ENCODE measurements at regions of chr1 and their contacts with region 1.

Region 1: DNA sequence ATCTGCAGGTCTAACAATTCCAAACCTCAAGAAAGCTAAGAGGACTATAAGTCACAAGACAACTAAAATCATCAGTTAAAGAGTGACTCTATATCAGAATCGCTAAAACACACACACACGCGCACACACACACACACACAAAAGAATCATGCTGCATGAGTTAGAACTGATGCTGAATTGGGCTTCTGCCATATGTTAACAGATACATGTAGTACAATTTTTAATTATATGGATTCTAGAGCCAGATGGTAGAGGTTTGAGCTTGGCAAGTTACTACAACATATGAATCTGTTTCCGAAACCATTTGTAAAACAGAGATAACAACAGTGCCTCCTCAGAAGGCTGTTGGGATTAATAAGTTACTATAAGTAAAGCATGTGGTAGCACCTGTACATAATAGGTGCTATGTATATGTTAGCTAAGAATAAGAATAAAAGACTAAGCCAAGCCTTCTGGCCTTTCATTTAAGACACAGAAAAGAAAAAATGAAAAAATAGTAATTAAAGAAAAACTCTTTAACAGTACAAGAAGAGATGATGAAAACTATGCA is 17.9 kb downstream of the EPRS1 start:
- DNase-seq: no peak
- ATAC-seq: no peak
- H3K4me3 ChIP-seq: no peak overlapping the region
- H3K4me3 Mint-ChIP-seq: no peak overlapping the region
- H3K27ac ChIP-seq: no peak overlapping the region
- H3K27ac Mint-ChIP-seq: no peak overlapping the region
- H3K4me1 ChIP-seq: no peaks in the 10 kb centered on the region
- H3K4me1 Mint-ChIP-seq: no peaks in the 10 kb centered on the region
- H3K27me3 ChIP-seq: no peaks in the 10 kb centered on the region
- H3K27me3 Mint-ChIP-seq: no peaks in the 10 kb centered on the region
- CTCF ChIP-seq: no peak

Region 2: DNA sequence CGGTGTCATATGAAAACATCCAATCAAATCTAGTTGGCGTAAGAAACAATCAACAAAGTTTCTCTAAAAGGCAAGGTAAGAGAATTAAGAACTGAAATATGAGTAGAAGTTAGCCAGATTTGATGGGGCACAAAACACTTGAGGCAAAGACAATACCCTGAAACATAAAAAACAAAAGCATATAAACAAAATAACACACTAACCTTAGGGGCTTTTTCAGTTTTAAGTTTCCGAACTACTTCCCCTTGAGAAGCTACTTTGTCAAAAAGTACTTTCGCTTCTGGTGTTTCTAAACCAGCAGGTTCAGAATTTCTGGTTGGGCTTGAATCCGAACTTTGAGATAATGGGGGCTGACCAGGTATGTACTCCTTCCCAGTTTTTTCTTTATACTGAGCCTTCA is 40.0 kb before region 1 on chr1:
- CTCF ChIA-PET with region 1: no interaction called
- POLR2A ChIA-PET with region 1: no interaction called
- intact Hi-C with region 1: loop called in 1 of 2 experiments (anchors 5 kb)
- DNase-seq: no peak
- ATAC-seq: no peak
- H3K4me3 ChIP-seq: no peak overlapping the region
- H3K4me3 Mint-ChIP-seq: no peak overlapping the region
- H3K27ac ChIP-seq: no peak overlapping the region
- H3K27ac Mint-ChIP-seq: no peak overlapping the region
- H3K4me1 ChIP-seq: no peaks in the 10 kb centered on the region
- H3K4me1 Mint-ChIP-seq: no peaks in the 10 kb centered on the region
- H3K27me3 ChIP-seq: no peaks in the 10 kb centered on the region
- H3K27me3 Mint-ChIP-seq: no peaks in the 10 kb centered on the region
- CTCF ChIP-seq: no peak

Measured in CD4-positive, alpha-beta T cell (primary cell).